ENCODE measurements at regions of chr21 and their contacts with region 1.

Region 1: DNA sequence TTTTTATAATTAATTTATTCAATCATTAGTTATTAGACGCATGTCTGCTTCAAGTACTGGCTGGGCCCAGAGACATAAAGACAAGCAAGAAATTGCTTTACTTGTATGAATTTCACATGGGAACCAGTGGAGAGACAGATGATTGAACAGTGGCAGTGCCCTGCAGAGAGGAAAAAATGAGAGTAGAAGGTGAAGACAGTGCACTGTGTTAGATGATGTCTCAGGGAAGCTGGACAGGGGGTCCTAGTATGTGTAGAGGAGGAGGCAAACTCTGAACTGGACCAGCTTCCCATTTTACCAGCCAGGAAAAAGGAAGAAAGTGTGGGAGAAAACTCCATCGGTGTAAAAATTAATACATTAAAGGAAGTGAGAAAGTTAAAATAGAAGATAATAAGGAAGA is 126.0 kb downstream of the BACH1 start:
- DNase-seq: no peak
- ATAC-seq: no peak
- H3K4me3 ChIP-seq: no peak overlapping the region
- H3K4me3 Mint-ChIP-seq: no peak overlapping the region
- H3K27ac ChIP-seq: no peak overlapping the region
- H3K27ac Mint-ChIP-seq: no peak overlapping the region
- H3K4me1 ChIP-seq: no peaks in the 10 kb centered on the region
- H3K4me1 Mint-ChIP-seq: peaks cover 0 to 5% (median 2%) of the 10 kb centered on the region in 3 donors
- H3K27me3 ChIP-seq: no peaks in the 10 kb centered on the region
- H3K27me3 Mint-ChIP-seq: no peaks in the 10 kb centered on the region

Region 2: GRCh38 chr21:29413683-29414082 is 11.0 kb before region 1 on chr21:
- CTCF ChIA-PET with region 1: no interaction called
- POLR2A ChIA-PET with region 1: no interaction called
- DNase-seq: no peak
- ATAC-seq: no peak
- H3K4me3 ChIP-seq: no peak overlapping the region
- H3K4me3 Mint-ChIP-seq: no peak overlapping the region
- H3K27ac ChIP-seq: no peak overlapping the region
- H3K27ac Mint-ChIP-seq: no peak overlapping the region
- H3K4me1 ChIP-seq: no peaks in the 10 kb centered on the region
- H3K4me1 Mint-ChIP-seq: peaks cover 1 to 3% (median 3%) of the 10 kb centered on the region in 3 donors
- H3K27me3 ChIP-seq: no peaks in the 10 kb centered on the region
- H3K27me3 Mint-ChIP-seq: no peaks in the 10 kb centered on the region

Region 3: DNA sequence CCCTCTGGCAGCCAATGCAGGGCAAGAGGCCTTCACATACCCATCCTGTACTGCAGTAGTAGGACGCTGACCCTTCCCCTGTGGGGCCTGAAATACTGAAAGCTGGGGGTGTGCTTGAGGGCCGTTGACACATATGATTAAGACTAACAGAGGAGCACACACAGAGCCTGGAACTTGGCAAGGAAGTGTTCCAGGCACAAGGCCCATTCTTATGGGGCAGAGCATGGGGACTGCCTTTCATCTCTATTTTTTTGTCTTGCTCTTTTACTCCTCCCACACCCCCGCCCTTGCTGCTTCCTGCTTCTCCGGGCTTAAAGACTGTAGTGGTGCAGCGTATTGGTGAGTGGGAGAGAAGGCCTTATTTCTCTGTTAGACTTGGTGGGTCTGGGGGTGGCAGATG is 11.4 kb after region 1 on chr21:
- CTCF ChIA-PET with region 1: no interaction called
- POLR2A ChIA-PET with region 1: no interaction called
- DNase-seq: peak; percentile 13 to 69 (median 45)
- ATAC-seq: peak; percentile 87 to 97 (median 93)
- H3K4me3 ChIP-seq: peak overlapping the region in 1 of 2 donors; percentile 34
- H3K4me3 Mint-ChIP-seq: peak overlapping the region; percentile 76 to 79 (median 78)
- H3K27ac ChIP-seq: peak overlapping the region; percentile 53
- H3K27ac Mint-ChIP-seq: peak overlapping the region; percentile 87 to 88
- H3K4me1 ChIP-seq: peaks cover 5 to 13% of the 10 kb centered on the region in 2 experiments
- H3K4me1 Mint-ChIP-seq: peaks cover 27 to 39% (median 35%) of the 10 kb centered on the region in 3 donors
- H3K27me3 ChIP-seq: no peaks in the 10 kb centered on the region
- H3K27me3 Mint-ChIP-seq: no peaks in the 10 kb centered on the region

Region 4: GRCh38 chr21:29521872-29522271 is 97.1 kb after region 1 on chr21:
- CTCF ChIA-PET with region 1: no interaction called
- POLR2A ChIA-PET with region 1: interaction called in 1 of 2 experiments, 12 read pairs
- DNase-seq: no peak
- ATAC-seq: no peak
- H3K4me3 ChIP-seq: no peak overlapping the region
- H3K4me3 Mint-ChIP-seq: no peak overlapping the region
- H3K27ac ChIP-seq: no peak overlapping the region
- H3K27ac Mint-ChIP-seq: no peak overlapping the region
- H3K4me1 ChIP-seq: no peaks in the 10 kb centered on the region
- H3K4me1 Mint-ChIP-seq: no peaks in the 10 kb centered on the region
- H3K27me3 ChIP-seq: peaks cover 0 to 5% of the 10 kb centered on the region in 2 experiments
- H3K27me3 Mint-ChIP-seq: no peaks in the 10 kb centered on the region